ENCODE measurements at regions of chr1 and their contacts with region 1.

Region 1: GRCh38 chr1:234486498-234487448 is 7.8 kb upstream of the TARBP1 start:
- DNase-seq: peak; percentile 59
- ATAC-seq: peak; percentile 66
- H3K4me3 Mint-ChIP-seq: no peak overlapping the region
- H3K27ac Mint-ChIP-seq: no peak overlapping the region
- H3K4me1 Mint-ChIP-seq: peaks cover 31% of the 10 kb centered on the region
- H3K27me3 Mint-ChIP-seq: peaks cover 20% of the 10 kb centered on the region

Region 2: DNA sequence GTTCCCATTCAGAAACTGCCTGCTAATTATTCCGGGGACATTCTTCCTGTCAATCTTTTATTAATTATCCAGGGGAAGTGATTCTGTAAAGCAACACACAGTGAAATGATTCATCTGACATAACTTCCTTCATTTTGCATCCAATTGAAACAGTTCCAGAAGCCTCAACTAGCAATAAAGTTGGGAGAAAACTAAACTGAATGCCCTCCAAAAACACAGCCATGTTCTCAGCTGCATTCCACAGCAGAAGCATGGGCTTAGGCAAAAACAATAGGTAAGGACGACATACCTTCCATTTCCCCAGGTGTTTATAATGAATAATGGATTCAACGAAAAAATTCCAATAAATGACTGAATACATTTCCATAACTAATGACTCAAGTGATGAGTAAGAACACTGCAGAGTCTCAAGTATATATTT is 29.1 kb after region 1 on chr1:
- CTCF ChIA-PET with region 1: no interaction called
- POLR2A ChIA-PET with region 1: no interaction called
- DNase-seq: no peak
- ATAC-seq: no peak
- H3K4me3 Mint-ChIP-seq: no peak overlapping the region
- H3K27ac Mint-ChIP-seq: no peak overlapping the region
- H3K4me1 Mint-ChIP-seq: peaks cover 28% of the 10 kb centered on the region
- H3K27me3 Mint-ChIP-seq: no peaks in the 10 kb centered on the region

Region 3: DNA sequence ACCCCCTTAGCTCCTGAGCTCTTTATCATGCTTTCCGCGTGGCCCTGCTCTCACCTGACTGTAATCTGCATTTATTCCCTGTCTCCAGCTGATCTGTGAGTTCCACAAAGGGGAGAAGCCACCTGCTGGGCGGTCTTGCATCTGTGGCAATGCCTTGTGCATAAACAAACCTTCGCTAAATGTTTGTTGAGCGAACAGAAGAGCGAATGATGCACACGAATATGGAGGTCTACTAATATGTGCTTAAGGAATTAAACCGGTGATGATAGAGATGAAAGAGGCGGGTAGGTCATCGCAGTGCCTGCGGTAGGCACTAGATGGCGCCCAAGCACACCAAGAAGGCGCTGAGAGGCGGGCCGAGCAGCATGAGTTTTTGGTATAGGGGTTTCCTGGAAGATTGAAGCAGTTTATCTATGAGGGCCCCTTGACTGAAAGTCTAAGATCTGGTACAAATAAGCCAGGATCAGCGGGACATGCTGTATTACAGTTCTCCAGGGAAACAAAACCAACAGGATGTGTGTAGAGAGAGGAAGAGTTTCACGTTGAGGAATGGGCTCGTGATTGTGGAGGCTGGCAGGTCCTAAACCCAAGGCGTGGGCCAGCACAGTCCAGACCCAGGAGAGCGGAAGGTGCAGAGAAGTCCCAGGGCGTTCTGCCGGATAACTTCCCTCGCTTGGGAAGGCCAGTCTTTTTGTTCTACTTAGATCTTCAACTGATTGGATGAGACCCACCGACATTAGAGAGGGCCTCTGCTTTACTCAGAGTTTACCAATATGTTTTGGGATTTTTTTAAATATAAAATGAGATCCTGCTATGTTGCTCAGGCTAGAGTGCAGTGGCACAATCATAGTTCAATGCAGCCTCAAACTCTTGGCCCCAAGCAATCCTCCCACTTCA is 607.2 kb after region 1 on chr1:
- CTCF ChIA-PET with region 1: interaction called, 11 read pairs
- POLR2A ChIA-PET with region 1: no interaction called
- DNase-seq: peak; percentile 89
- ATAC-seq: peak; percentile 92
- H3K4me3 Mint-ChIP-seq: no peak overlapping the region
- H3K27ac Mint-ChIP-seq: peak overlapping the region; percentile 60
- H3K4me1 Mint-ChIP-seq: peaks cover 19% of the 10 kb centered on the region
- H3K27me3 Mint-ChIP-seq: peaks cover 5% of the 10 kb centered on the region

Measured in activated CD8-positive, alpha-beta T cell treated with anti-CD3 and anti-CD28 coated beads, Interleukin-2, amount 10 ng/mL, durations not matched to agents 7 days and 5 days (primary cell).